WTC11 (cell line): ENCODE measurements at regions of chr15 and their contacts with region 1.

Region 1: DNA sequence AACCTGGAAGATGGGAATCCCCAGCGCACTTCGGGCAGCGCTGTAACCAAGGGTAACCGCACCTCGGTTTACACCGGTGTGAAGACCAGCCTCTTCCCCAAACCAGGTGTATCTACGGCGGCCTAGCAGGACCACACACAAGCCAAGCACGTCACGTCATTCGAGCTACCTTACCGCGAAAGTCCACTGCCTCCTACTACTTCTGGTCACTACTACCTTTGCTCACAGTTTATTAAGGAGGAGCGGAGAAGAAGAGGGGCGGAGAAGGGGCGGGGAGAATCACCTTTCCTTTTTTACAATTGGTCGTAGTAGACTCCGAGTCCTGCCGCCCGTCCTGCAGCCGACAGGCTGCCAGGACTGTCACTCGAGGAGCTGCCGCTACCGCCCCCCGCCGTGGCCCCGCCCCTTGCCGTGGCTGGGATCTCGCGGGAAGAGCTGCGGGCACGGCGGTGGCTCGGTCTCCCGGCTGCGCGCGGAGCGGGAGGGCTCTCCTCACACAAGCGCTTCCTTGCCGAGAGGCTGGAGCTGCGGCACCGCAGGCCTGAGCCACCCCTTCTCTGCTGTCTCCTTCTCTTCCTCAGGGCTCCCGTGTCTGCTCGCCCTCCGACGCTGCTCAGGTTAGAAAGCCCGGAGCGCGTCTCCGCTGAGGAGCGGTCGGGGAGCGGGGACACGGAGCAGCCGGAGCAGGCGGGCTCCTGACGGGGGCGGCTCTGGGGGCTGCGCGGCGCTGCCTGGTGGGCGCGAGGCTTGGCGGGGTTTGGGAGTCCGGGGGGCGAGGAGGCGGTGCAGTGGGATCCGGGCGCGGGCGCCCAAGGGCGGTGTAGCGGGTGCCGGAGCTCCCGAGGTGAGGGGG is at the start of gene GLCE:
- DNase-seq: peak; percentile 97
- ATAC-seq: peak; percentile 94
- H3K4me3 Mint-ChIP-seq: peak within 1 kb of the TSS; percentile 95
- H3K27ac Mint-ChIP-seq: peak within 1 kb of the TSS; percentile 93
- H3K4me1 Mint-ChIP-seq: peaks cover 25% of the 10 kb centered on the region
- H3K27me3 Mint-ChIP-seq: peaks cover 17% of the 10 kb centered on the region
- CTCF ChIP-seq: no peak
- total RNA-seq, gene GLCE: 10.7 to 12.5 TPM (median 11.3 TPM) in 3 replicates

Region 2: DNA sequence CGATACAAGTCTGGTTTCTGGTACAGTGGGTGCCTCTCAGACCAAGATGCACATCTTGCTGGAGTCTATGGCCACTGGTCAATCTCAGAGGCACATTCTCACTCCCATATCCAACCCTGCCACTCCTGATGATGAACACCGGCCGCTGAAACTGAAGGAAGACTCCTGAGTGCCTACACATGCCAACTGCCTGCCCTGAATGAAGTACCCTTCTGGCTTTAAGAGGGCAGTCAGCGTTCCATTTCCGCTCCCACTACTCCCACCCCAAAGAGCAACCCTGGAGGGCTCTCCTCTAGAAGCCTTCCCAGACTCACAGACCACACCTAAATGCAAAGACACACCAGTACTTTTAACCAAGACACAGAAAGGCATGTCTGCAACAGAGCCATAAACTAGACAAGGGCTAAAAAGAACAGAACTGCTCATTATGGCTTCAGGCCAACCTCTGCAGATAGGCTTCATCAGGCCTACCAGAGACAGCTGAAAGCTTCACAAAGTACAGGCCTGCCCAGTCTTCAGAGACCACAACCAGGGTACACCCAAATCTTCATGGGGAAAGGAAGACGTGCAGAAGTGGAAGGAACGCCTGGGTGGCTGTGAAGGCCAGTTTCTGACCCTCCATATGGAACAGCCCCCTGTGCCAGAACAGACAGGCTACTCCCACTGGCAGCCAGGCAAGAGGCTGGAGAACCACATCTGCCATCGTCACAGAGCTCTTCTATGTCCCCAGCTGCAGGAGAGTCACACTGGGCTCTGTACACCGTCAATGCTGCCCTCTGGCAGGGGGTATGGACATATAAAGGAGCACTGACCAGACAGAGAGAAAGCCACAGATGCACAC is 353.9 kb before region 1 on chr15:
- CTCF ChIA-PET with region 1: no interaction called
- POLR2A ChIA-PET with region 1: no interaction called
- DNase-seq: no peak
- ATAC-seq: no peak
- H3K4me3 Mint-ChIP-seq: no peak overlapping the region
- H3K27ac Mint-ChIP-seq: peak overlapping the region; percentile 77
- H3K4me1 Mint-ChIP-seq: peaks cover 58% of the 10 kb centered on the region
- H3K27me3 Mint-ChIP-seq: no peaks in the 10 kb centered on the region
- CTCF ChIP-seq: no peak

Region 3: GRCh38 chr15:69141286-69141701 is 19.1 kb before region 1 on chr15:
- CTCF ChIA-PET with region 1: interaction called, 10 read pairs
- POLR2A ChIA-PET with region 1: no interaction called
- DNase-seq: no peak
- ATAC-seq: no peak
- H3K4me3 Mint-ChIP-seq: no peak overlapping the region
- H3K27ac Mint-ChIP-seq: no peak overlapping the region
- H3K4me1 Mint-ChIP-seq: peaks cover 14% of the 10 kb centered on the region
- H3K27me3 Mint-ChIP-seq: peaks cover 11% of the 10 kb centered on the region
- CTCF ChIP-seq: no peak

Region 4: DNA sequence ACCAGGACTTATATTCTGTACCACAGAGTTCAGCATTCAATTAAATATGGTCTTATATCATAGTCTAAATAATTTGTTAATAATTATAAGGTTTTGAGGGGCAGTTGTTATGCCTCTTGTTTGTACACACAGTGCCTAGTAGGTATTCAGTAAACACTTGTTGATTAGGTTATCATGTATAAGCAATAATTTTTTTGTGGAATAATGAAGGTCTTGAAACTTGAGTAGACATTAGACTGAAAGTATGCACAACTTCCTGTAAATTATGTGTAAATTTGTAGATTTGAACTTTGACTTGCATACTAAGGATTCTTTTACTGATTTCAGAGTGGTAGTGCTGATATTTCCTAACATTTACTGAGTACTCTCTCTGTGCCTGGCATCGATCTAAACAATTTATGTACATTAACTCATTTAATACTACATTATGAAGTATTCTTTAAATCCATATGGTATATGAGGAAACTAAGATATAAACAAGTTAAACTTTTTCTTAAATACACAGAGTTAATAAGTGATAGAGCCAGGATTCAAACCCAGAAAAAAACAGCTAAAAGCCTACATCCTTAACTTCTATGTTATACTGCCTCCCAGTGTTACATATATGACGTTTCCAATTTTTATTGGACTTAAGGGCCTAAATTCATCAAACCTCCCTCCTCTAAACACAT is 65.1 kb after region 1 on chr15:
- CTCF ChIA-PET with region 1: interaction called, 10 read pairs
- POLR2A ChIA-PET with region 1: no interaction called
- DNase-seq: no peak
- ATAC-seq: 0 out of 2 replicates have a peak, but pooled peaks have one; percentile 38
- H3K4me3 Mint-ChIP-seq: no peak overlapping the region
- H3K27ac Mint-ChIP-seq: no peak overlapping the region
- H3K4me1 Mint-ChIP-seq: peaks cover 15% of the 10 kb centered on the region
- H3K27me3 Mint-ChIP-seq: no peaks in the 10 kb centered on the region
- CTCF ChIP-seq: no peak

Region 5: DNA sequence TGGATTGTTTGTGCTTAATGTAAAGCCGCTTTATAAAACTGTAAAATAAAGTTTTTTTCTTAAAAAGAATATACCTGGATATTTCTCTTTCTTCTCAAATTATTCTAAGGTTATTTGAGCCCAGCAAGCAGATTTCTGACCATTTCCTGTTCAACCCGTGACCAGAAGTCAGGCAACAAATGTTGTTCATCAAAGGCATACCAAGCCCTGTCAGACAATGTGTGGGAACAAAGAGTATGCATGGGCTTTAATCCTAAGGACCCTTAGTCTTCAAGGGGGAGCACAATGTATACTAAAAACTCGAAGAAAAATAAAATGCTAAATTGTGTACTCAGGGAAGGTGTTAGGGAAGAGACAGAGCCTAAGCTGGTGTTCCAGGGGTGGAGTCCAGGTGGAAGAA is 111.8 kb after region 1 on chr15:
- CTCF ChIA-PET with region 1: no interaction called
- POLR2A ChIA-PET with region 1: no interaction called
- DNase-seq: no peak
- ATAC-seq: peak; percentile 49
- H3K4me3 Mint-ChIP-seq: no peak overlapping the region
- H3K27ac Mint-ChIP-seq: no peak overlapping the region
- H3K4me1 Mint-ChIP-seq: peaks cover 39% of the 10 kb centered on the region
- H3K27me3 Mint-ChIP-seq: no peaks in the 10 kb centered on the region
- CTCF ChIP-seq: no peak